ENCODE measurements at regions of chr17 and their contacts with region 1.

Region 1: DNA sequence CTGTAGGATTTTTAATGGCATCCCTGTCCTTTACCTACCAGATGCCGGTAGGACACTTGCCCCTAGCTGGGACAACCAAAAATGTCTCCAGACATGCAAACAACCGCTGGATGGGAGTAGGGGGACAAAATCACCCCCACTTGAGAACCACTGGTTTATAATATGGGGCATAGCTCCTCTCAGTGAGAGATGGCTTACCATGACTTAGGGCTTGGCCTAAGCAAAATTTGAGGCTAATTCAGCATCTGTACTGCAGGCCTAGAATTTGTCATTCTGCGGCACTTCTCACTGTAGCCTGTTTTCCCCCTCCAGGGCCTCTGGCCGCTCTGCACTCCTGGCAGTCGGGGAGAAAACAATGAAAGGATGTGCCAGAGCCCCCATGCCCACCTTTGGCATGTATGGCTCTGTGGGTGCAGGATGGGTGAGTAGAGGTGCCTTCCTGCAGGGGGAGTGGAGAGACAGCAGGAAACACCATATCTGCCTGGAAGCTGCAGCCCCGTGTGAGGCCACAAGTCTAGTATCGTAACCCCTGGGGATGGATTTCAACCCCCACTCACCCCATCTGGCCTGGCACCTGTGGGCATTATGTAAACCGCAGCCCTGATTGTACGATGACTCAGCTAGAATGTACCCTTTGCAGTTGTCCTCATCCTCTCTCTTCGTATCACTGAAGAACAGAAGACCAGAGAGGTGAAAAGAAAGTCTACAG is 268.1 kb downstream of the SOX9 start:
- DNase-seq: peak; percentile 86 to 89
- H3K4me3 ChIP-seq: no peak overlapping the region
- H3K27ac ChIP-seq: peak overlapping the region; percentile 87
- H3K4me1 ChIP-seq: peaks cover 86% of the 10 kb centered on the region
- H3K27me3 ChIP-seq: no peaks in the 10 kb centered on the region
- CTCF ChIP-seq: peak; percentile 63

Region 2: GRCh38 chr17:71118039-71118438 is 1270.9 kb before region 1 on chr17:
- CTCF ChIA-PET with region 1: no interaction called
- POLR2A ChIA-PET with region 1: no interaction called
- intact Hi-C with region 1: loop called (anchors 2 kb)
- DNase-seq: peak in 1 of 2 experiments; percentile 27
- H3K4me3 ChIP-seq: no peak overlapping the region
- H3K27ac ChIP-seq: no peak overlapping the region
- H3K4me1 ChIP-seq: 0 out of 2 replicates have a peak, but pooled peaks cover 3% of the 10 kb centered on the region
- H3K27me3 ChIP-seq: no peaks in the 10 kb centered on the region
- CTCF ChIP-seq: peak; percentile 69

Region 3: DNA sequence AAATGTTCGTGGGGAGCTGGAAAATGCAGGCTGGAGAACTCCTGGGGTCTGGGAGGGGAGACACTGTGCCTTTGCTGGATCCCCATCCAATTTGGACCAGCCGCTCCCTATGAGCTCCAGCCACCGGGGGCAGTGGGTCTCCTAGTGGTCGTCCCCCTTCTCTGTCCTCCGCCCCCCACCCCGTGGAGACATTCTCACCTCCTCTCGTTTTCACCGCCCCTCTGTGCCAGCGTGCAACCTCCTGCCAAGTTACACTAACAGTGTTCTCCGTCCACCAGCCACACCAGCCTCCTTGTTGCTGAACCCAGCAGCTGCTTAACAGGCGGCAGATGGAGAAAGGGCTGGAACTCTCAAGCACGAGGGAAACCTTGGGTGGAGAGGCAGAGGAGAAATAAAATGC is 335.5 kb before region 1 on chr17:
- CTCF ChIA-PET with region 1: no interaction called
- POLR2A ChIA-PET with region 1: no interaction called
- intact Hi-C with region 1: no loop called
- DNase-seq: no peak
- H3K4me3 ChIP-seq: no peak overlapping the region
- H3K27ac ChIP-seq: no peak overlapping the region
- H3K4me1 ChIP-seq: no peaks in the 10 kb centered on the region
- H3K27me3 ChIP-seq: no peaks in the 10 kb centered on the region
- CTCF ChIP-seq: no peak

Region 4: GRCh38 chr17:72151565-72152391 is 237.1 kb before region 1 on chr17:
- CTCF ChIA-PET with region 1: no interaction called
- POLR2A ChIA-PET with region 1: no interaction called
- intact Hi-C with region 1: loop called (anchors 5 kb)
- DNase-seq: peak; percentile 86 to 99
- H3K4me3 ChIP-seq: peak overlapping the region; percentile 38; the same call in 1 of the 2 replicates
- H3K27ac ChIP-seq: peak overlapping the region; percentile 92
- H3K4me1 ChIP-seq: peaks cover 36% of the 10 kb centered on the region
- H3K27me3 ChIP-seq: no peaks in the 10 kb centered on the region
- CTCF ChIP-seq: no peak

Region 5: DNA sequence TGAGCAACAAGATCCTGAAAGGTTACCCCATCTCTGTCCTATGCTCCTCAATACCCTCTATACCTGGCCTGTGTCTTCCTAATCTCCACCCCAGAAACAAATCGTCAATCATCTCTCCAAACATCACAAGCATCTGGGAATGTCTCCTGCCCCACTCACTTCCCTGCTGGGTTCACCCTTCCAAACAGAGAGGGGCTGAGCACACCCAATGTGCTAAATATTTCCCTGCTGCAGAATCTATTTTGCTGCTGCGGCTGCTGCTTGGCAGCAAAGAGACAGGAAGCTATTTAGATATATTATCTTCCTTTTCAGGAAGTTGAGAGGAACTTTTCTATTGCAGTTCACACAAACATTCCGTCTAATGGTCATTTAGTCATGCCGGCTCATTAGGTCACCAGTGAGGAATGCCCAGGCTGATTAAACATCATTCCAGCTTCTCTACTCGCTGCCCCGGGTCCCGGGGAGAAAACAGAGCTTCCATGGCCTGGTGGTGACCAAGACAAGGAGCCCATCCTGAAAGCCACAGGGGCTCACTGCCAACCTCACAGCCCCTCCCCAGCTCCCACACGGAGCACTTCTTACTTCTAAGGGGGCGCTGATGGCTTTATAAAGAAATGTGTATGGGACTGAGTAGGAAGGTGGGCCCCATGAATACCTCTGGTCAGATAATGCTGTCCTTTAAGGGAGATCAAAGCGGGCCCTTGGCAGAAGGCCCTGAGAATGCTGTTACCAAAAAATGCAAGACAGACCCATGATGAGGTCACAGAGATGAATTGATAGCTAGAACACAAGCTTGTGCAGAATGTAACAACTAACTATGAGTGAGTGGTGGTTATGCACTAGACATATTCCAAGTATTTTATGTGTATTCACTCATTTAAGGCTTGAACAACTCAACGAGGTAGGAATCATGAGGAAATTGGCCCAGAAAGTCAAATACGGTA is 49.8 kb before region 1 on chr17:
- CTCF ChIA-PET with region 1: no interaction called
- POLR2A ChIA-PET with region 1: no interaction called
- intact Hi-C with region 1: loop called (anchors 2 kb)
- DNase-seq: peak; percentile 81 to 97
- H3K4me3 ChIP-seq: no peak overlapping the region; the same call in 1 of the 2 replicates
- H3K27ac ChIP-seq: peak overlapping the region; percentile 88
- H3K4me1 ChIP-seq: peaks cover 34% of the 10 kb centered on the region
- H3K27me3 ChIP-seq: no peaks in the 10 kb centered on the region
- CTCF ChIP-seq: no peak

Region 6: GRCh38 chr17:72362376-72363088 is 26.4 kb before region 1 on chr17:
- CTCF ChIA-PET with region 1: no interaction called
- POLR2A ChIA-PET with region 1: no interaction called
- intact Hi-C with region 1: loop called (anchors 2 kb)
- DNase-seq: peak in 1 of 2 experiments; percentile 79
- H3K4me3 ChIP-seq: no peak overlapping the region
- H3K27ac ChIP-seq: peak overlapping the region; percentile 41
- H3K4me1 ChIP-seq: peaks cover 44% of the 10 kb centered on the region
- H3K27me3 ChIP-seq: no peaks in the 10 kb centered on the region
- CTCF ChIP-seq: no peak

Region 7: GRCh38 chr17:72465191-72466024 is 76.5 kb after region 1 on chr17:
- CTCF ChIA-PET with region 1: no interaction called
- POLR2A ChIA-PET with region 1: interaction called, 6 read pairs
- intact Hi-C with region 1: loop called (anchors 1 kb)
- DNase-seq: peak; percentile 92 to 97
- H3K4me3 ChIP-seq: peak overlapping the region; percentile 53
- H3K27ac ChIP-seq: peak overlapping the region; percentile 100
- H3K4me1 ChIP-seq: peaks cover 79% of the 10 kb centered on the region
- H3K27me3 ChIP-seq: no peaks in the 10 kb centered on the region
- CTCF ChIP-seq: no peak